ENCODE measurements at regions of chr17 and their contacts with region 1.

Region 1: DNA sequence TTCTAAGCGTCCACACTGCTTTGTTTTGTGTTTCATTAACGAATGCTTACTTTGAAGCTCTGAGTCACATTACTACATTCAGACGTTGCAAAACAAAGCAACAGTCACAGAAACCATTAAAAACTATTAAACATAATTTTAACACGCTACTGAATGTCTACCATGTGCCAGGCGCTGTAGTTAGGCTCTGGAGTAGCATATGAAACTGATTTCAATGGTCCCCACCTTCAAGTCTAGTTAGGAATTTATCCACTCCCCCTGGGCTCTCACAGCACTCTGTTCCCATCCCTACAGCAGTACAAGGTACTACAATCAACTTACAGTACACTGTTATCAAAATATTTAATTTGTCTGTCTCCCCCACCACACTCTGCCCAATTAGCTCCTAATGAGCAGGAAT is 631 bp downstream of the UTP6 start:
- DNase-seq: peak; percentile 15

Region 2: DNA sequence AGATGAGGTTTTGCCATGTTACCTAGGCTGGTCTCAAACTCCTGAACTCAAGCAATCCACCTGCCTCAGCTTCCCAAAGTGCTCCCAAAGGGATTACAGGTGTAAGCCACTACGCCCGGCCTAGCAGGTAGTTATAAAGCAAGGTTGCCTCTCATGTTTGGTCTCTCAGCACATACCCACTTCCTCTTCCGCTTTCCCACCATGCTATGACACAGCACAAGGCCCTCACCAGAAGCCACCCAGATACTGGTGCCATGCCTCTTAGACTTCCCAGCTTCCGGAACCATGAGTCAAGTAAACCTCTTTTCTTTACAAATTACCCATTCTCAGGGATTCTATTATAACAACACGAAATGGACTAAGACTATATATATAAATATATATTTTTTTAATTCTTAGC is 185.4 kb before region 1 on chr17:
- CTCF ChIA-PET with region 1: no interaction called
- POLR2A ChIA-PET with region 1: no interaction called
- DNase-seq: no peak

Region 3: GRCh38 chr17:31829649-31830048 is 71.2 kb before region 1 on chr17:
- CTCF ChIA-PET with region 1: no interaction called
- POLR2A ChIA-PET with region 1: no interaction called
- DNase-seq: no peak

Region 4: GRCh38 chr17:31845291-31845690 is 55.6 kb before region 1 on chr17:
- CTCF ChIA-PET with region 1: no interaction called
- POLR2A ChIA-PET with region 1: no interaction called
- DNase-seq: no peak

Region 5: DNA sequence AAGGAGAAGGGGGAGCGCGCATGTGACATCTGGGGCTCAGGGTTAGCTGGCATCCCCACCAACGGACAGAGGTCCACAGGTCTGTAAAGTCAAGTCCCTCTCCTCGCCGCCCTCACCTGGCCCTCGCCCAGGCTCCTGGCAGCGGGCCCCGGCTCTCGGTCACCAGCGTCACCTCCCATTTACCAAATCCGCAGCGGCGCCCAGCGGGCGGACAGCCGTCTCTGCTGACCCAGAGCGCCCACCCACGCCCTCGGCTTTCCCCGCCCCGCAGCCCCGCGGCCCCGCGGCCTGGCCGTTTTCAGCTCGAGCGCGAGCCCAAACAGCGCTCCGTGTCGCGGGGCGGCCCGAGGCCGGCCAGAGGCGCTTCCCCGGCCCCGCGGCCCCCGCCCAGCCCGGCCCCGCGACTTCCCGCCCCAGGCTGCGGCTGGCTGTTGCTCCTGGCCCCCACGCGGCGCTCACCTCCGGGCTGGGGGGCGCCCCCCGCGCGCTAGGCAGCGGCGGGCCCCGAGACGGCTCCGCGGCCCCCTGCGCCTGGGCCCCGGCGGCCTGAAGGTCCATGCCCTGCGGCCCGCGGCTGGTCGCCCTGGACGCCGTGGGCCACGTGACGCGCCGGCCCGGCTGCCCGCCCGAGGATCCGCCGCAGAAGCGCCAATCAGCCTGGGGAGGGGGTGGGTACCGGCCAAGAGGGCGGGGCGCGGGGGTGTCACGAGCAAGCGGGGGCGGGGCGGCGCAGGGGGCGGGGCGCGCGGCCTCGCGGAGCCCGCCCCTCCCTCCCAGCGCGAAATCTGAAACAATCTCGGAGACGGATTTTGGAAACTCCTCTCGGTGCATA is 42.0 kb before region 1 on chr17 and contains the start of gene COPRS:
- CTCF ChIA-PET with region 1: interaction called, 3 read pairs
- POLR2A ChIA-PET with region 1: interaction called, 11 read pairs
- DNase-seq: peak; percentile 91

Region 6: DNA sequence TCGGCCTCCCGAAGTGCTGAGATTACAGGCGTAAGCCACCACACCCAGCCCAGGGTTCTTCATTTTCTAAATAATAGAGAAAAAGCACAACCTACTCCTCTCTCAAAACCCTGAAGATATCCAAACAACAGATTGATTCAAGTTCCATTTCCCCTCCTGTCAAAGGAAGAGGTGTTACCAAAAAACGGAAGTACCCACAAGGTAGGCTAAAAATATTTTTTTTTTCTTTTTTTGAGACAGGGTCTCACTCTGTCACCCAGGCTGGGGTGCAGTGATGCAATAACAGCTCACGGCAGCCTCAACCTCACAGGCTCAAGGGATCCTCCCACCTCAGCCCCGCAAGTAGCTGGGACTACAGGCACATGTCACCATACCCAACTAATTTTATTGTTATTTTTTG is 18.3 kb before region 1 on chr17:
- CTCF ChIA-PET with region 1: no interaction called
- POLR2A ChIA-PET with region 1: interaction called, 15 read pairs
- DNase-seq: no peak

Measured in HEK293T (cell line).